B cell (primary cell): ENCODE measurements at regions of chr2 and their contacts with region 1.

Region 1: GRCh38 chr2:44560352-44560751 is 198.6 kb downstream of the CAMKMT start:
- DNase-seq: peak; percentile 22
- ATAC-seq: no peak
- H3K4me3 ChIP-seq: no peak overlapping the region
- H3K4me3 Mint-ChIP-seq: no peak overlapping the region
- H3K27ac ChIP-seq: no peak overlapping the region
- H3K27ac Mint-ChIP-seq: no peak overlapping the region
- H3K4me1 ChIP-seq: peaks cover 0 to 5% of the 10 kb centered on the region in 2 donors
- H3K4me1 Mint-ChIP-seq: no peaks in the 10 kb centered on the region
- H3K27me3 ChIP-seq: no peaks in the 10 kb centered on the region
- H3K27me3 Mint-ChIP-seq: no peaks in the 10 kb centered on the region
- CTCF ChIP-seq: peak; percentile 31

Region 2: GRCh38 chr2:43995733-43996533 is 564.4 kb before region 1 on chr2 and contains the start of gene LRPPRC:
- CTCF ChIA-PET with region 1: no interaction called
- POLR2A ChIA-PET with region 1: no interaction called
- intact Hi-C with region 1: no loop called
- DNase-seq: peak; percentile 96
- ATAC-seq: peak; percentile 94
- H3K4me3 ChIP-seq: peak within 1 kb of the TSS; percentile 75 to 98 (median 79)
- H3K4me3 Mint-ChIP-seq: peak within 1 kb of the TSS; percentile 90
- H3K27ac ChIP-seq: peak within 1 kb of the TSS; percentile 69 to 89
- H3K27ac Mint-ChIP-seq: peak within 1 kb of the TSS; percentile 96
- H3K4me1 ChIP-seq: peaks cover 24 to 28% of the 10 kb centered on the region in 2 donors
- H3K4me1 Mint-ChIP-seq: peaks cover 47% of the 10 kb centered on the region
- H3K27me3 ChIP-seq: no peaks in the 10 kb centered on the region
- H3K27me3 Mint-ChIP-seq: peaks cover 5% of the 10 kb centered on the region
- CTCF ChIP-seq: no peak
- total RNA-seq, gene LRPPRC: 75.6 and 77.3 TPM in 2 replicates

Region 3: DNA sequence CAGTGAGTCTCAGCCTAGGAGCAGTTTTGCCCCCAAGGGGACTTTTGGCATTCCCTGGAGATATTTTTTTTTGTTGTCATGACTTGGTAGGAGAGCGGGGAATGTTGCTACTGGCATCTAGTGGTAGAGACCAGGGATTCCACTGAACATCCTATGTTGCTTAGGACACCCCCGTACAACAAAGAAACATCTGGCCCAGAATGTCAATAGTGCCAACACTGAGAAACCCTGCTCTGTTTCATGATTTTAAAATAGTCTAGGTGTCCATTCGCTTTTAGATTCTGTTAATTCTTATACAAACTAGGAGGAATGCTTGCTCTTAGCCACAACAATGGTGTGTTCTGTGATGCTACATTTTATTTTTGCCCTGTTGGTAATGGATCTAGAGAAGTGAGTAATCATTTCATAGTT is 155.3 kb after region 1 on chr2:
- CTCF ChIA-PET with region 1: interaction called, 13 read pairs
- POLR2A ChIA-PET with region 1: no interaction called
- intact Hi-C with region 1: no loop called
- DNase-seq: peak; percentile 15
- ATAC-seq: no peak
- H3K4me3 ChIP-seq: no peak overlapping the region
- H3K4me3 Mint-ChIP-seq: no peak overlapping the region
- H3K27ac ChIP-seq: peak overlapping the region in 1 of 2 donors; percentile 80
- H3K27ac Mint-ChIP-seq: peak overlapping the region; percentile 61
- H3K4me1 ChIP-seq: peaks cover 35 to 45% of the 10 kb centered on the region in 2 donors
- H3K4me1 Mint-ChIP-seq: peaks cover 43% of the 10 kb centered on the region
- H3K27me3 ChIP-seq: no peaks in the 10 kb centered on the region
- H3K27me3 Mint-ChIP-seq: no peaks in the 10 kb centered on the region
- CTCF ChIP-seq: no peak